Activated CD8-positive, alpha-beta memory T cell treated with anti-CD3 and anti-CD28 coated beads, Interleukin-2, amount 10 ng/mL, durations not matched to agents 7 days and 5 days (primary cell): ENCODE measurements at regions of chr9 and their contacts with region 1.

Region 1: GRCh38 chr9:33737811-33738606 is 57.4 kb upstream of the PRSS3 start:
- DNase-seq: peak; percentile 62
- ATAC-seq: peak; percentile 76
- H3K4me3 Mint-ChIP-seq: no peak overlapping the region
- H3K27ac Mint-ChIP-seq: no peak overlapping the region
- H3K4me1 Mint-ChIP-seq: peaks cover 4% of the 10 kb centered on the region
- H3K27me3 Mint-ChIP-seq: peaks cover 13% of the 10 kb centered on the region

Region 2: DNA sequence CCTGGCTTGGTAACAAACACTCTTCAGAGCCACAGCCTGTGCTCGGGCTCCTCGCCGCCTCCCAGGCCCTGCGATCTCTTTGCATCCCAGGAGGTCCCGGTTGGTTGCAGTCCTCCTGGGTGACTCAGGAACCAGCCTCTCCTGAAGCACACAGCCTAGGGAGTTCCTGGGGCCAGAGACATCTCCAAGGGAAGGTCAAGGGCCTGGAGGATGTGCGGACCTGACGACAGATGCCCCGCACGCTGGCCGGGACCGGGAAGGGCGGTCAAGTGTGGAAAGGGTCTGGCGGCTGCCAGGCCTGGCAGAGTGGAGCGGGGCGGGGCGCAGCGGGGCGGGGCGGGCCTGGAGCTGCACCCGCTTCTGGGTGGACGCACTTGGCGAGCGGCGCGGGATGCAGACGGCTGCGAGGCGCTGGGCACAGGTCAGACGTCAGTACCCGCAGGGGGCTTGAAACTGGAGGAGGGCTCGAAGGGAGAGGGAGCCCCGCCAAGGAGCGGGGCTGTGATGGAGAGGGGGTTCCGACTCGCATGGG is 12.4 kb after region 1 on chr9:
- CTCF ChIA-PET with region 1: interaction called, 17 read pairs
- DNase-seq: no peak
- ATAC-seq: no peak
- H3K4me3 Mint-ChIP-seq: no peak overlapping the region
- H3K27ac Mint-ChIP-seq: no peak overlapping the region
- H3K4me1 Mint-ChIP-seq: peaks cover 44% of the 10 kb centered on the region
- H3K27me3 Mint-ChIP-seq: peaks cover 67% of the 10 kb centered on the region

Region 3: GRCh38 chr9:33778700-33779351 is 40.8 kb after region 1 on chr9:
- CTCF ChIA-PET with region 1: interaction called, 64 read pairs
- DNase-seq: peak; percentile 68
- ATAC-seq: peak; percentile 80
- H3K4me3 Mint-ChIP-seq: no peak overlapping the region
- H3K27ac Mint-ChIP-seq: no peak overlapping the region
- H3K4me1 Mint-ChIP-seq: peaks cover 12% of the 10 kb centered on the region
- H3K27me3 Mint-ChIP-seq: peaks cover 24% of the 10 kb centered on the region